Natural killer cell (primary cell): ENCODE measurements at regions of chr10 and their contacts with region 1.

Region 1: GRCh38 chr10:88990384-88991160 is at the start of gene FAS:
- DNase-seq: peak; percentile 58 to 95
- ATAC-seq: peak; percentile 63 to 81 (median 70)
- H3K4me3 ChIP-seq: peak within 1 kb of the TSS; percentile 94
- H3K4me3 Mint-ChIP-seq: peak within 1 kb of the TSS; percentile 97
- H3K27ac ChIP-seq: peak within 1 kb of the TSS; percentile 80
- H3K27ac Mint-ChIP-seq: peak within 1 kb of the TSS; percentile 95 to 96
- H3K4me1 ChIP-seq: peaks cover 21% of the 10 kb centered on the region
- H3K4me1 Mint-ChIP-seq: peaks cover 54 to 59% of the 10 kb centered on the region in 2 donors
- H3K27me3 ChIP-seq: no peaks in the 10 kb centered on the region
- H3K27me3 Mint-ChIP-seq: no peaks in the 10 kb centered on the region
- CTCF ChIP-seq: no peak
- total RNA-seq, gene FAS: 17.3 to 29.9 (median 26.5) TPM

Region 2: DNA sequence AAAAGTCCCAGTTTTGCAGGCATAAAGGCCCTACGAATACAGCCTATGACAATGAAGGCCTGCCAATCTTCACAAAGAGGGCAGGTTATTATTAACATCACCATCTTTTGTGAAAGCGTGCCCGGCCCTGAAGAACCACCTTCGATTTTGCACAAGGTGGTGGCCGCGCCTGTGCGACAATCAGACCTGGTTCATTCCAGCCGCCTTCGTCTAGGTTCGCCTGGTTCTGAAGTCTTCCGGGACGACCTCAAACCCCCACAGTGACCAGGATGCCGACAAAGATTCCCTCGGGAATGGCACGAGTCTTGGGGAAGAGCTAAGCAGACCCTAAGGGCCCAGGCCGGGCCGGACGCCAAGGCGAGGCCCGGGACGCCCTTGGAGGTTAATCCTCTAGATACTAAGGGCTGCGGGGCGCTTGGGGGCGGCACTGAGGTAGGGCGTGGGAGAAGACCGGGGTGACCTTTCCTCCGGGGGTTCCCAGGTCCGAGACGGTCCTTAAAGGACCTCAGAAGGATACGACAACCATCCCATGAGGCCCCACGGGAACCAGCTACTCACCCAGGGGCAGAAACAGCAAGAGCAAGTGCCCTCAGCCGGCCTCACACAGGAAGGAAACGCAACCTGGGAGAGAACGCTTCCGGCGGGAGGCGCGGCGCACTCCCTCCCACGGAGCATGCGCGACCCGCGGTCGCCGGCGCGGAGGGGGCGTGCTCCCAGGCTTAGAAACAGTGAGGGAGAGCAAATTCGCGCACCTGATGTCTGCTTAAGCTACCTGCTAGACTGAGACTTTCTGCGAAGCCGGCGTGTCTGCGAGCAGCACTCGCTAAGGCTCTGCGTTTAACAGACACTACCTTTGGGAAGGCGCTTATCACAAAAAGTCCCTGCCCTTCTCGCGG is 1172.7 kb before region 1 on chr10 and contains the start of gene ATAD1:
- intact Hi-C with region 1: loop called (anchors 5 kb)
- DNase-seq: peak; percentile 82 to 96
- ATAC-seq: peak; percentile 78 to 92 (median 86)
- H3K4me3 ChIP-seq: peak within 1 kb of the TSS; percentile 80
- H3K4me3 Mint-ChIP-seq: peak within 1 kb of the TSS; percentile 95
- H3K27ac ChIP-seq: peak within 1 kb of the TSS; percentile 84
- H3K27ac Mint-ChIP-seq: peak within 1 kb of the TSS; percentile 96 to 97
- H3K4me1 ChIP-seq: peaks cover 12% of the 10 kb centered on the region
- H3K4me1 Mint-ChIP-seq: peaks cover 38 to 41% of the 10 kb centered on the region in 2 donors
- H3K27me3 ChIP-seq: no peaks in the 10 kb centered on the region
- H3K27me3 Mint-ChIP-seq: peaks cover 0 to 2% of the 10 kb centered on the region in 2 donors
- CTCF ChIP-seq: no peak
- total RNA-seq, gene ATAD1: 37.5 to 55.2 (median 43.0) TPM

Region 3: GRCh38 chr10:88835096-88835909 is 155.3 kb before region 1 on chr10:
- intact Hi-C with region 1: loop called (anchors 5 kb)
- DNase-seq: peak; percentile 76 to 94
- ATAC-seq: peak; percentile 94 to 97 (median 96)
- H3K4me3 ChIP-seq: no peak overlapping the region
- H3K4me3 Mint-ChIP-seq: no peak overlapping the region
- H3K27ac ChIP-seq: no peak overlapping the region
- H3K27ac Mint-ChIP-seq: no peak overlapping the region
- H3K4me1 ChIP-seq: peaks cover 5% of the 10 kb centered on the region
- H3K4me1 Mint-ChIP-seq: peaks cover 28 to 30% of the 10 kb centered on the region in 2 donors
- H3K27me3 ChIP-seq: no peaks in the 10 kb centered on the region
- H3K27me3 Mint-ChIP-seq: no peaks in the 10 kb centered on the region
- CTCF ChIP-seq: peak; percentile 94

Region 4: GRCh38 chr10:88974446-88975376 is 15.9 kb before region 1 on chr10:
- intact Hi-C with region 1: loop called (anchors 2 kb)
- DNase-seq: peak in 1 of 2 donors; percentile 63
- ATAC-seq: peak; percentile 71 to 86 (median 71)
- H3K4me3 ChIP-seq: peak overlapping the region; percentile 56
- H3K4me3 Mint-ChIP-seq: peak overlapping the region; percentile 96
- H3K27ac ChIP-seq: peak overlapping the region; percentile 66
- H3K27ac Mint-ChIP-seq: peak overlapping the region; percentile 90 to 92
- H3K4me1 ChIP-seq: peaks cover 6% of the 10 kb centered on the region
- H3K4me1 Mint-ChIP-seq: peaks cover 9 to 11% of the 10 kb centered on the region in 2 donors
- H3K27me3 ChIP-seq: no peaks in the 10 kb centered on the region
- H3K27me3 Mint-ChIP-seq: no peaks in the 10 kb centered on the region
- CTCF ChIP-seq: no peak

Region 5: GRCh38 chr10:89029785-89030437 is 39.3 kb after region 1 on chr10:
- intact Hi-C with region 1: no loop called
- DNase-seq: peak; percentile 43 to 85
- ATAC-seq: peak; percentile 79 to 84 (median 83)
- H3K4me3 ChIP-seq: no peak overlapping the region
- H3K4me3 Mint-ChIP-seq: no peak overlapping the region
- H3K27ac ChIP-seq: no peak overlapping the region
- H3K27ac Mint-ChIP-seq: no peak overlapping the region
- H3K4me1 ChIP-seq: peaks cover 4% of the 10 kb centered on the region
- H3K4me1 Mint-ChIP-seq: peaks cover 0 to 5% of the 10 kb centered on the region in 2 donors
- H3K27me3 ChIP-seq: no peaks in the 10 kb centered on the region
- H3K27me3 Mint-ChIP-seq: no peaks in the 10 kb centered on the region
- CTCF ChIP-seq: peak; percentile 93